ENCODE measurements at regions of chr13 and their contacts with region 1.

Region 1: DNA sequence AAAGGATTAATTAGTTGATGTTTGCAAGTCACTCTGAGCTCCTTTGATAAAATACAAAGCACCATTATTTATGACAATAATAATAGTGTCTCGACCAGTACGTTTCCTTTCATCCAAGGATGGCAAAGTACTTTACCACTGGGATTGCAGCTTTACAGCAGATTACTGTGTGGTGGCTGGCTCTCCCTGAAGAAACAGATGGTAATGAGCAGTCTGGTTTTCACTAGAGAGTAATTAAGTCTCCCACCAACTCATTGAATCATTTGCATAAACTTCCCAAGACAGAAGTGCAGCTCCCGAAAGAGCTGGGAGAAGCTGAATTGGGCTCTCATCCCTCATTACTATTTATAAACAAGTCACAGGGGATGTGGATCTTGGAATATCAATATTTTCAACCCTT is 48.7 kb downstream of the KLF5 start:
- DNase-seq: no peak
- H3K4me3 ChIP-seq: no peak overlapping the region
- H3K4me3 Mint-ChIP-seq: no peak overlapping the region
- H3K27ac Mint-ChIP-seq: no peak overlapping the region
- H3K4me1 ChIP-seq: peaks cover 38% of the 10 kb centered on the region
- H3K4me1 Mint-ChIP-seq: peaks cover 40% of the 10 kb centered on the region
- H3K27me3 ChIP-seq: no peaks in the 10 kb centered on the region
- H3K27me3 Mint-ChIP-seq: no peaks in the 10 kb centered on the region
- CTCF ChIP-seq: no peak

Region 2: GRCh38 chr13:73065665-73066340 is 41.7 kb before region 1 on chr13:
- CTCF ChIA-PET with region 1: no interaction called
- POLR2A ChIA-PET with region 1: no interaction called
- intact Hi-C with region 1: loop called (anchors 2 kb)
- DNase-seq: peak in 1 of 2 experiments; percentile 74
- H3K4me3 ChIP-seq: no peak overlapping the region
- H3K4me3 Mint-ChIP-seq: peak overlapping the region; percentile 33
- H3K27ac Mint-ChIP-seq: peak overlapping the region; percentile 55
- H3K4me1 ChIP-seq: peaks cover 85% of the 10 kb centered on the region
- H3K4me1 Mint-ChIP-seq: peaks cover 50% of the 10 kb centered on the region
- H3K27me3 ChIP-seq: no peaks in the 10 kb centered on the region
- H3K27me3 Mint-ChIP-seq: no peaks in the 10 kb centered on the region
- CTCF ChIP-seq: no peak

Region 3: GRCh38 chr13:73578251-73578875 is 470.9 kb after region 1 on chr13:
- CTCF ChIA-PET with region 1: no interaction called
- POLR2A ChIA-PET with region 1: no interaction called
- intact Hi-C with region 1: no loop called
- DNase-seq: no peak
- H3K4me3 ChIP-seq: no peak overlapping the region
- H3K4me3 Mint-ChIP-seq: no peak overlapping the region
- H3K27ac Mint-ChIP-seq: no peak overlapping the region
- H3K4me1 ChIP-seq: no peaks in the 10 kb centered on the region
- H3K4me1 Mint-ChIP-seq: peaks cover 1% of the 10 kb centered on the region
- H3K27me3 ChIP-seq: no peaks in the 10 kb centered on the region
- H3K27me3 Mint-ChIP-seq: no peaks in the 10 kb centered on the region
- CTCF ChIP-seq: no peak